IMR-90 (cell line): ENCODE measurements at regions of chr19 and their contacts with region 1.

Region 1: DNA sequence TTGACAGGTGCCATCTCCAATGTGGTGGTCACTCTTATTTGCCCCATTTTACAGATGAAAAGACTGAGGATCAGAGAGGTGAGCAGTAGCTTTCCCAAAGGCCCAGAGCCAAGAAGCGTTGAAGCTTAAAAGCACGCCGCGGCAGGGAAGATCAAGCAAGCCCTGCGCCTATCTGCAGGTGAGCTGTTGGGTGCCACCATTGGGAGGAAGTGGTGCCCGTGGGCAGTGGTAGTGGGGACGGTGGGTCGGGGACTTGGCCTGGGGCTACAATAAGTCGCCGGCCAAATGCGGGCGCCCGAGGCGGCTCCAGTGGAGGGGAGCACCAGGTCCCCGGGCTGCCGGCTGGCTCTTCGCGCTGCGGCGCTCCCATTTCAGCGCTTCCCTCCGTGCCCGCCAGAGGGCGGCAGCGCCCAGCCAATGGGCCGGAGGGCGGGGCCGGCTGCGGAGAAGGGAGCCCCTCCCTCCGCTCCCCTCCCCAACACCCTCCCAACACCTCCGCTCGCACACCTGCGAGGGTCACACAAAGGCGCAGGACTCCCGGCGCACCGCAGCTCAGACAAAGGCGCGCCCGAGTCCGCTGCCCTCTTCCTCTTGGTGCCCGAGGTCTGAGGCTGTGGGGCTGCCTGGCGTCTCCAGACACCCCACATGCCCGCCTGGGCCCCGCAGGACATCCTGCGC is 744 bp upstream of the POU2F2 start:
- DNase-seq: no peak
- ATAC-seq: peak; percentile 95
- H3K4me3 ChIP-seq: peak overlapping the region; percentile 21; the same call in 1 of the 2 replicates
- H3K27ac ChIP-seq: no peak overlapping the region
- H3K4me1 ChIP-seq: peaks cover 14% of the 10 kb centered on the region
- H3K27me3 ChIP-seq: peaks cover 14% of the 10 kb centered on the region
- CTCF ChIP-seq: peak; percentile 95
- POLR2A ChIP-seq: 0 out of 2 replicates have a peak, but pooled peaks have one; percentile 25
- RAD21 ChIP-seq: peak; percentile 96

Region 2: DNA sequence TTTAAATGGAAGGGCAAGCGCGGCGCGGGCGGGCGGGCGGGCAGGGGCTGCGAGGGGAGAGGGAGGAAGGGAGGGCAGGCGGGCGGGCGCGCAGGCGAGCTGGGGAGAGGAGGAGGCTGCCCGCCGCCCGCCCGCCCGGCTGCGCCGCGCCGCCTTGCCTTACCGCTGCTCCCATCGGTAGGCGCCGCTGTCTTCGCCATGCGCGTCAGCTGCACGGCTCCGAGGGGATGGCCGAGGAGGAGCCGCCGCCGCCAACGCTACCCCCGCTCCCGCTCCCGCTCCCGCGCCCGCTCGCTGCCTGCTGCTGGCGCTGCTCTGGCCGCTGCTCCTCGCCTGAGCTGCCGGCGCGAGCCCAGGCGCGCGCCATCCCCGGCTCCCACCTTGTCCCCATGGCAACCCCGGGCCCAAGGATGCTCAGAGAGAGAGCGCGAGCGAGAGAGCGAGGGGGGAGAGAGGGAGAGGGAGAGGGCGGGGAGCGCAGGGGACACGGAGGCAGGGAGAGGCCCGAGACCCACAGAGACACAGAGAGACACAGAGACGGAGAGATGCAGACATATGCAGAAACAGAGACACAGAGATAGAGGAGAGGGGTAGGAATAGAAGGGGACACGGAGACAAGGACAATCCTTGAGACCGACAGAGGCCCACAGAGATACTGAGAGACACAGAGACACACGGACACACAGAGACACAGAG is 44.1 kb after region 1 on chr19:
- CTCF ChIA-PET with region 1: no interaction called
- POLR2A ChIA-PET with region 1: no interaction called
- dilution Hi-C with region 1: no loop called
- in situ Hi-C with region 1: no loop called
- intact Hi-C with region 1: loop called (anchors 2 kb)
- DNase-seq: peak; percentile 76
- ATAC-seq: peak; percentile 99
- H3K4me3 ChIP-seq: peak overlapping the region; percentile 64
- H3K27ac ChIP-seq: no peak overlapping the region
- H3K4me1 ChIP-seq: peaks cover 2% of the 10 kb centered on the region; the same call in 1 of the 2 replicates
- H3K27me3 ChIP-seq: peaks cover 80% of the 10 kb centered on the region
- CTCF ChIP-seq: peak; percentile 54
- POLR2A ChIP-seq: no peak
- RAD21 ChIP-seq: peak; percentile 25; the same call in 1 of the 2 replicates

Region 3: GRCh38 chr19:42244347-42245220 is 111.6 kb after region 1 on chr19:
- CTCF ChIA-PET with region 1: no interaction called
- POLR2A ChIA-PET with region 1: no interaction called
- dilution Hi-C with region 1: no loop called
- in situ Hi-C with region 1: no loop called
- intact Hi-C with region 1: loop called (anchors 2 kb)
- DNase-seq: peak; percentile 93
- ATAC-seq: peak; percentile 38
- H3K4me3 ChIP-seq: peak overlapping the region; percentile 55
- H3K27ac ChIP-seq: peak overlapping the region; percentile 89
- H3K4me1 ChIP-seq: peaks cover 8% of the 10 kb centered on the region
- H3K27me3 ChIP-seq: no peaks in the 10 kb centered on the region
- CTCF ChIP-seq: peak; percentile 75
- POLR2A ChIP-seq: 0 out of 2 replicates have a peak, but pooled peaks have one; percentile 35
- RAD21 ChIP-seq: peak; percentile 42; the same call in 1 of the 2 replicates

Region 4: DNA sequence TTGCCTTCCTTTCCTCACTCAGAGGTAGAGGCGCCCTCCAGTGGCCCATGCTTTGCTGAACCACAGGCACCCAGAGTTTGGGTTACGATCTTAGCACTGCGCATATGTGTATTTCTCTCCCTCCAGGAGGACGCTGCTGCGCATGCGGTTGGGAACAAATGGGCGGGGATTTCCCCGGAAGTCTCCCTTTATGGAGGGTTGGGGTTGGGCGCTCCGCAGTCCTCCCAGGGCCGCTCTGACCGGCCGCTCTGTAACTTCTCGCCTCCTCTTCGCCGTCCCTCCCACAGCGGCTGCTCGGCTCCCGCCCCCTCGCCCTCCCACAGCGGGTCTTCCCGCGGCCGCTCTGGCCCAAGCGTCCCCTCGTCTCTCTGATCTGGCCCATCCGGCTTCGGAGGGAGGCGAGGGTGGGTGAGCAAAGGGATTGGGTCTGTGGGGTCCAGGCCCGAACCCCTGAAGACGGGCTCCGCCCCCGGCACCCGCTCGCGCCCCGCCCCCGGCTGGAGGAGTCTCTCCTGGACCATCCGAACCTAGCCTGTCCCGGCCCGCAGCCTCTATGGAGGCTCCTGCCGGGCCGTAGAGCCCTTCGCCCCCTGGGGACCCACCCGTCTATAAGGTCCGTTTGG is 192.4 kb after region 1 on chr19 and contains the start of gene MEGF8:
- CTCF ChIA-PET with region 1: interaction called, 6 read pairs
- POLR2A ChIA-PET with region 1: no interaction called
- dilution Hi-C with region 1: no loop called
- in situ Hi-C with region 1: loop called (anchors 10 kb)
- intact Hi-C with region 1: no loop called
- DNase-seq: peak; percentile 99
- ATAC-seq: peak; percentile 98
- H3K4me3 ChIP-seq: peak within 1 kb of the TSS; percentile 78
- H3K27ac ChIP-seq: peak within 1 kb of the TSS; percentile 30
- H3K4me1 ChIP-seq: peaks cover 4% of the 10 kb centered on the region
- H3K27me3 ChIP-seq: peaks cover 26% of the 10 kb centered on the region
- CTCF ChIP-seq: peak; percentile 96
- POLR2A ChIP-seq: peak; percentile 72
- RAD21 ChIP-seq: peak; percentile 78
- total RNA-seq, gene MEGF8: 2.3 and 2.5 TPM in 2 replicates